ENCODE measurements at regions of chr16 and their contacts with region 1.

Region 1: GRCh38 chr16:53054670-53055485 is at the start of gene CHD9:
- DNase-seq: peak; percentile 86 to 96 (median 94)
- ATAC-seq: peak; percentile 89 to 91
- H3K4me3 ChIP-seq: peak within 1 kb of the TSS; percentile 75
- H3K27ac ChIP-seq: peak within 1 kb of the TSS; percentile 94
- H3K4me1 ChIP-seq: peaks cover 4% of the 10 kb centered on the region
- H3K27me3 ChIP-seq: no peaks in the 10 kb centered on the region
- total RNA-seq, gene CHD9: 49.4 to 73.5 (median 57.4) TPM

Region 2: DNA sequence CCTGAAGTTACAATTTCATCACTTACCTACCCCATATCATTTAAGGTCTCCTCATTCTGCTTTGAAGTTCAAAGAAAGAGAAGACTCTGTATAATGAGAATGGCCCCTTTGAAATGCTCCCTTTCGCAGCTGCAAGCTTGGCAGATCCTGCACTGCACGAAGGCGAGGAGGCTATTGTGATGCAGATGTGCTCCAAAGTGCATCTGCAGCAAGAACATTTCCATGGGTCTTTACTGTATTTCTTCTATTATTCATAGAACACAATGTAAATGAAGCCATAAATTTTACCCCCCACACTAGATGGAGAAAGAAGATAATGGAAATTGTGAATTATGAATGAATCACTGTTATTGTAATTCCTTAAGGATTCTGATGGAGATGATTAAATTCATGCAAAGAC is 180.8 kb before region 1 on chr16:
- intact Hi-C with region 1: no loop called
- DNase-seq: no peak
- ATAC-seq: no peak
- H3K4me3 ChIP-seq: no peak overlapping the region
- H3K27ac ChIP-seq: no peak overlapping the region
- H3K4me1 ChIP-seq: no peaks in the 10 kb centered on the region
- H3K27me3 ChIP-seq: no peaks in the 10 kb centered on the region

Region 3: GRCh38 chr16:53083119-53083518 is 28.2 kb after region 1 on chr16:
- intact Hi-C with region 1: no loop called
- DNase-seq: no peak
- ATAC-seq: no peak
- H3K4me3 ChIP-seq: no peak overlapping the region
- H3K27ac ChIP-seq: no peak overlapping the region
- H3K4me1 ChIP-seq: peaks cover 18% of the 10 kb centered on the region
- H3K27me3 ChIP-seq: no peaks in the 10 kb centered on the region

Region 4: DNA sequence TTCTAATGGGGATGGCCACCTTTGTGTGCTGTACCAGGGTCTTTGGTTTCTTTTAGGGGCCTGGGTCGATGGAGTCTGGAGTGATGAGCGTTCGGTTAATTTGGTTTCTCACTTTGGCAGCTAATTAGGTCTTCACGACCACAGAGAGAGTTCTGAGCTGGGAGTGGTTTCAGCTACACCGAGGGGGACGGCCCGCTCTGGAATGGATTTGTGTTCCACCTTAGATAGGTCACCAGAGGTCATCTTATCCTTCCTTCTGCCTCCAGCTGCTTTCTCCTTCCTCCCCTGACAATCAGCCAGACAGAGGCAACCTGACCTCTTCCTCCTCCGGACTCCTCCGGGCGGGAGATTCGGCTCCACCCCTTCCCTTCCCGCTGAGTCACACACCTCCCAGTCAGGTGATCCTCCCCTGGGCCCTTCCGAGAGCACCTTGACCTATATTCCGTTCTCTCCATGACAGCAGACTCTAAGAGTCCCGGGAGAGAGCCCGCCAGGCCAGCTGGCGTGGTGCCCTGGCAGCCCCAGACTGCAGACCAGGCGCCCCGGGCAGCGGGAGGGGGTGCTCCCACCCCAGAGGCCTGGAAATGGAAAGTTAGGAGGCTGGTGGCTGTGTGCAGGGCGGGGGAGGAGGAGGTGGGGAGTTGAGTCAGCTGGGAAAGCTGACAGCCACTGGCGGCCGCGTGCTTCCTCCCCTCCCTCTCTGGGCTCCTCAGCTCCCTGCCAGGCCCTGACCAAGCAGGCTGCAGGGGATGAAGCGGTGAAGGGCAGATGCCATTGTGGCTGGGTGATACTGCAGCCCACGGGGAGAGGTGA is 44.6 kb after region 1 on chr16:
- intact Hi-C with region 1: loop called in 3 of 4 experiments (anchors 5 kb)
- DNase-seq: peak; percentile 96 to 98 (median 97)
- ATAC-seq: peak; percentile 95
- H3K4me3 ChIP-seq: peak overlapping the region; percentile 8
- H3K27ac ChIP-seq: peak overlapping the region; percentile 96
- H3K4me1 ChIP-seq: peaks cover 7% of the 10 kb centered on the region
- H3K27me3 ChIP-seq: no peaks in the 10 kb centered on the region

Region 5: DNA sequence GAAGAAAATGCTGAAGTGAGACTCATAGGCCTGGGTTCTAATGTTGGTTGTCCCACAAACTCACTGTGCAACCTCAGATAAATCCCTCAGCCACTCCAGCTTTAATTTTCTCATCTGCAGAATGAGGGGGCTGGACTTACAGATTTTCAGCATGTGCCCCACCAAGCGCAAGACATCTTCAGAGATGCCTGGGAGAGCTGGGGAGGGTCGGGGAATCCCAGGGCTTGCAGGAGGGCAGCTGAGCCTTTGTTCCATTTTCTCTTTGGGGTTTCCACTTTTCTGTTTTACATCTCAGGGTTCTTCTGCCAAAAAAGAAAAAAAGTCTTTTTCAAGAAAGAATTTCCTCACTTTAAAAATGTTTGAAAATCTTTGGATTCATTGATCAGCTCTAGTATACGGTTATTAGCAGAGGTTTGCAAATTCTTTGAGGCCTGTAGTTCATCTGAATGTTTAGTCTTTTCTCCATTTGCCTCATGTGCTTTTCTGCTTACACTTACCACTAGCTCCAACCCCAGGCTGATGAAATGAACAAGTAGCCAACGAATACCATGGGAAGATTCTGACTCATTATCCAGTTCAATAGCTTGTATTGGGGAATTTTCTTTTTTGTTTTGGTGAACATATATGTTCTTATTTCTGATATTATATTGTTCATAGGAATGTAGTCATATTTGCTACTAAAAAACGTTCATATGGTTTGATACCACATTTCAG is 56.4 kb after region 1 on chr16:
- intact Hi-C with region 1: no loop called
- DNase-seq: no peak
- ATAC-seq: no peak
- H3K4me3 ChIP-seq: no peak overlapping the region
- H3K27ac ChIP-seq: no peak overlapping the region
- H3K4me1 ChIP-seq: no peaks in the 10 kb centered on the region
- H3K27me3 ChIP-seq: no peaks in the 10 kb centered on the region

Region 6: GRCh38 chr16:53159781-53160436 is 105.0 kb after region 1 on chr16:
- intact Hi-C with region 1: loop called in 1 of 4 experiments (anchors 10 kb)
- DNase-seq: no peak
- ATAC-seq: peak; percentile 68 to 77
- H3K4me3 ChIP-seq: no peak overlapping the region
- H3K27ac ChIP-seq: no peak overlapping the region
- H3K4me1 ChIP-seq: no peaks in the 10 kb centered on the region
- H3K27me3 ChIP-seq: no peaks in the 10 kb centered on the region

Region 7: GRCh38 chr16:53219795-53220454 is 165.0 kb after region 1 on chr16:
- intact Hi-C with region 1: loop called in 1 of 4 experiments (anchors 10 kb)
- DNase-seq: no peak
- ATAC-seq: peak; percentile 73 to 82
- H3K4me3 ChIP-seq: no peak overlapping the region
- H3K27ac ChIP-seq: no peak overlapping the region
- H3K4me1 ChIP-seq: peaks cover 9% of the 10 kb centered on the region
- H3K27me3 ChIP-seq: no peaks in the 10 kb centered on the region

Measured in right cardiac atrium (tissue), 5 donors.